ENCODE measurements at regions of chr10 and their contacts with region 1.

Region 1: DNA sequence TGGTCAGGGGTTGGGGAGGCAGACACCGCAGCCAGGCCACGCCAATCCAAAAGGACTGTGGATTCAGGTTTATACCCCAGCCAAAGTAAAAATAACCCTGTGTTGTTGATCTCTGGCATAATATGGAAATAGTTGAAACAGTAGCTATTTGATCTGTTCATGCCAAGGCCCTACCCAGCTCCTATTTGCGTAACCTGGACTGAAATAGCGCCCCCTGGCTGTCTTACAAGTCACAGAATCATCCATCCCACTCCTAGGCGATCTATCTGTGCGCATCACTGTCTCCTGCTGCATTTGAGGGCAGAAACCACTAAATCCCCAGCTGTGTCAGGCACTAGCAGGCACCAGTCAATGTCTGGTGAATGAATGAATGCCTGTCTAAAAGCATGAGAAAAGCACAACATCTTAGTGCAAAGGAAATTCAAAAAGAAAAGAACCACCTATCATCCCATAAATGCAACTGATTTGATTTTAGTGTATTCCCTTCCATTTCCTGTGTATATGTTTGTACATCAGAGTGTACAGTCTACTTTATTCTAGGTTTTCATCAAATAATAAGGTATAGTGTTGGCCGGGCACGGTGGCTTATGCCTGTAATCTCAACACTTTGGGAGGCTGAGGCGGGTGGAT is 160.0 kb downstream of the SLIT1 start:
- DNase-seq: peak; percentile 35 to 65
- H3K4me3 ChIP-seq: no peak overlapping the region
- H3K27ac ChIP-seq: peak overlapping the region in 1 of 2 donors; percentile 59
- H3K4me1 ChIP-seq: peaks cover 0 to 31% (median 23%) of the 10 kb centered on the region in 4 donors
- H3K27me3 ChIP-seq: peaks cover 0 to 4% of the 10 kb centered on the region in 2 donors
- CTCF ChIP-seq: peak; percentile 56 to 67

Region 2: DNA sequence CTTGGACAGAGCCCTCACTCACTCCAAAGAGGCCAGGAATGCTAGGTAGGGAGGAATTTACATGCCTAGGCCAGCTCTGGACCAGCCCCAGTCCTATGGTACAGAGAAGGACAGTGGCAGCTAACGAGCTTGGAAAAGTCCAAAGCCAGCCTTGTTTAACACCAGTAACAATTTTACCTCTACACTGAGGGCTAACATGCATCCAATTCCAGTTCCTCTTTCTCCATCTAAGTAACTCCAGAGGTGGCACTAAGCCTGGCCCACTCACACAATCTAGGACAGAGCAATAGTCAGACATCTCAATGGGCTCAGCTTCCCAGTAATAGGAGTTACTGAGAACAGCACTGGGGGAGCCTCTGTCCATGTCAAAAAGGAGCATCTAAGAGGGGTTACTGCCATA is 199.3 kb before region 1 on chr10:
- intact Hi-C with region 1: loop called (anchors 10 kb)
- DNase-seq: no peak
- H3K4me3 ChIP-seq: no peak overlapping the region
- H3K27ac ChIP-seq: no peak overlapping the region
- H3K4me1 ChIP-seq: peaks cover 0 to 7% (median 0%) of the 10 kb centered on the region in 4 donors
- H3K27me3 ChIP-seq: no peaks in the 10 kb centered on the region
- CTCF ChIP-seq: no peak